ENCODE measurements at regions of chr20 and their contacts with region 1.

Region 1: DNA sequence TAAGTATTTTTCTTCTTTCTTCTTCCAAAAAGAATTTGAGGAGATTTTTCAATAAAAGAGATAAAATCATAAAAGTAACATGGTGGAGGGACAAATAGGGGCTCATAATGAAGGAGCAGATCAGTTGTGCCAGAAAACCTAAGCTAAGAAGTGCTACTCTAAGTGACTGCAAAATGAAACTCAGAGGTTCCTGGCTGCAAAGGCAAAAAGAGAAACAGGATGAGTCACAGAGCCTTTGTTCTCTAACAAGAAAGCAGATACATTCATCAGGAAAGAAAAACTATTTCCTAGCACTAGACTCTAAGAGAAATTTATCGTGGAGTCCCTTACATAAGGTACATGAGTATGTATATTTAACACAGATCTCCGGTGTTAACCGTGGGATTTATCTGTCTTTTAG is 49.8 kb downstream of the TSHZ2 start:
- DNase-seq: peak in 2 of 9 donors; percentile 21 to 27
- ATAC-seq: peak; percentile 46
- H3K4me3 ChIP-seq: no peak overlapping the region
- H3K4me3 Mint-ChIP-seq: peak overlapping the region in 7 of 10 donors; percentile 14 to 73 (median 57)
- H3K27ac ChIP-seq: no peak overlapping the region
- H3K27ac Mint-ChIP-seq: peak overlapping the region; percentile 39 to 96 (median 67)
- H3K4me1 ChIP-seq: peaks cover 0 to 16% of the 10 kb centered on the region in 2 donors
- H3K4me1 Mint-ChIP-seq: peaks cover 23 to 76% (median 62%) of the 10 kb centered on the region in 7 donors
- H3K27me3 ChIP-seq: no peaks in the 10 kb centered on the region
- H3K27me3 Mint-ChIP-seq: no peaks in the 10 kb centered on the region

Region 2: GRCh38 chr20:52837378-52837777 is 184.6 kb before region 1 on chr20:
- CTCF ChIA-PET with region 1: no interaction called
- POLR2A ChIA-PET with region 1: no interaction called
- intact Hi-C with region 1: no loop called
- DNase-seq: no peak
- ATAC-seq: no peak
- H3K4me3 ChIP-seq: no peak overlapping the region
- H3K4me3 Mint-ChIP-seq: no peak overlapping the region
- H3K27ac ChIP-seq: no peak overlapping the region
- H3K27ac Mint-ChIP-seq: no peak overlapping the region
- H3K4me1 ChIP-seq: no peaks in the 10 kb centered on the region
- H3K4me1 Mint-ChIP-seq: peaks cover 0 to 4% (median 0%) of the 10 kb centered on the region in 7 donors
- H3K27me3 ChIP-seq: no peaks in the 10 kb centered on the region
- H3K27me3 Mint-ChIP-seq: peaks cover 0 to 6% (median 0%) of the 10 kb centered on the region in 5 donors

Region 3: DNA sequence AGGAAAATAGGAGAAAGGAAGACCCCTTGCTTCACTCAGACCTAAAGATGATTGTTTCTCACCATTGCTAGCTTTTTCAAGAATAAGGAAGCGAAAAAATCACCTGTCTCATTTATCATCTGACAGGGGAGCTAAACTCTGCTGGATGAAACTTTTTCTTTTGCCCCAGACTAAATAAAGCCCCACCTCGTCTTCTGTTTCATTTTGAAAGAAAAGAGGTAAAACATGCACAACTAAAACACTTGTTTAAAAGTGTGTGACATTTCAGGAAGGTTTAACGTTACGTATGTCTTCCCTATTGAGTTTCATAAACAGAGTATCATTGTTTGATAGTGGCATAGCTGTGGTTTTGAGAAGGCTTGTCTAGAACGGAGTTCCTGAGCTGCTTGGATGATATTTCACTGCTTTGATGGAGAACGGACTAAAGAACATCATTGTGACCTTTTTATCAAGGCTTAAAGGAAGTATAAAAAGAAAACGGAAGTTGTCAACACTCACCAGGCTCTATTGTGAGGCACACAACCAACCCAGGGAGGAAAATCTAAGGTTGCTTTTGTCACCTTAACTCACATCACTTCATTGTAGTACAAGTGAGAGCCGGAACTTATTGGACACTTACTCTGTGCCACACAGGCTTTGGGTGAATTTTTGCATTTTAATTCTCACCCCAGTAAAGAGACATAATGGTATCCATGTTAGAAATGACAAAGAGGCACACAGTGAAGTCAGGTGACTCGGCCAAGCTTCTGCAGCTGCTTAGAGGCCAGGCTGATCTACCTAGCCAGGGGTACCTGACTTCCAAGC is 20.2 kb before region 1 on chr20:
- CTCF ChIA-PET with region 1: no interaction called
- POLR2A ChIA-PET with region 1: interaction called, 10 read pairs
- intact Hi-C with region 1: loop called (anchors 1 kb)
- DNase-seq: peak in 7 of 9 donors; percentile 49 to 79 (median 71)
- ATAC-seq: peak; percentile 82
- H3K4me3 ChIP-seq: peak overlapping the region; percentile 32
- H3K4me3 Mint-ChIP-seq: peak overlapping the region; percentile 73 to 94 (median 84)
- H3K27ac ChIP-seq: peak overlapping the region; percentile 88
- H3K27ac Mint-ChIP-seq: peak overlapping the region in 7 of 9 donors; percentile 89 to 99 (median 97)
- H3K4me1 ChIP-seq: peaks cover 0 to 64% of the 10 kb centered on the region in 2 donors
- H3K4me1 Mint-ChIP-seq: peaks cover 27 to 97% (median 87%) of the 10 kb centered on the region in 7 donors
- H3K27me3 ChIP-seq: no peaks in the 10 kb centered on the region
- H3K27me3 Mint-ChIP-seq: no peaks in the 10 kb centered on the region

Region 4: DNA sequence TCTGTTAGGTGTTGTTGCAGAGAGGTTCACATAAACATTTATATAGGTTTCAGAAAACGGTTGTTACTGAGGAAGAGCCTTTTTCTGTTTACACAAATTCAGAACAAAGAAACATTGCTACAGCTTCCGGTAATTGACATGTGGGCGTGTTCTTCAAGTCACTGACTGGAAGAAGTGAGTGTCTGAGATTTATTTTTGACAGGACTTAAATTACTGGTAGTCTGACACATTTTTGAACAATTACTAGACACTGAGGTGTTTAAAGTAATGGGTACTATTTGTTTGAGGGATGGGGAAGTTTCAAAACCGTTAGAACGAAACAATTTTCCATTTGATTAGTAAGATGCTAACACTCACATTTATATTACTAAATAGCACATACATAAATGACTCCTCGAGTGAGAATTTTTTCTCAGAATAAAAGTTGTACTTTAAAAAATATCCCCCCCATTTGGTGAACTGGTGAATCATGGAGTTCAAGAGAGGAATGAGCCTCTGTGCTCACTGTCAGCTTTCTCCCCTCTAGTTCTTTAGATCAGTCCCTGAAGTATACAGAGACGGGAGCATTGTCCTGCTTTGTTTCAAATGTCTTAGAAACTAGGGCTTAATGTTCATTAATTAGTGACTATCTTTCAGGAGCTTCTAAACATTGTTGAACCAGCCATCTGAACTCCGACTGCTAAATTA is 48.9 kb after region 1 on chr20:
- CTCF ChIA-PET with region 1: no interaction called
- POLR2A ChIA-PET with region 1: no interaction called
- intact Hi-C with region 1: loop called in 1 of 2 experiments (anchors 2 kb)
- DNase-seq: peak in 4 of 9 donors; percentile 18 to 40 (median 37)
- ATAC-seq: peak; percentile 54
- H3K4me3 ChIP-seq: no peak overlapping the region
- H3K4me3 Mint-ChIP-seq: peak overlapping the region in 7 of 10 donors; percentile 9 to 61 (median 24)
- H3K27ac ChIP-seq: peak overlapping the region; percentile 4
- H3K27ac Mint-ChIP-seq: peak overlapping the region; percentile 44 to 94 (median 73)
- H3K4me1 ChIP-seq: peaks cover 0 to 13% of the 10 kb centered on the region in 2 donors
- H3K4me1 Mint-ChIP-seq: peaks cover 22 to 52% (median 44%) of the 10 kb centered on the region in 7 donors
- H3K27me3 ChIP-seq: no peaks in the 10 kb centered on the region
- H3K27me3 Mint-ChIP-seq: peaks cover 0 to 9% (median 0%) of the 10 kb centered on the region in 5 donors